Activated naive CD4-positive, alpha-beta T cell treated with anti-CD3 and anti-CD28 coated beads, Interleukin-2, amount 10 ng/mL, durations not matched to agents 7 days and 5 days (primary cell): ENCODE measurements at regions of chr19 and their contacts with region 1.

Region 1: DNA sequence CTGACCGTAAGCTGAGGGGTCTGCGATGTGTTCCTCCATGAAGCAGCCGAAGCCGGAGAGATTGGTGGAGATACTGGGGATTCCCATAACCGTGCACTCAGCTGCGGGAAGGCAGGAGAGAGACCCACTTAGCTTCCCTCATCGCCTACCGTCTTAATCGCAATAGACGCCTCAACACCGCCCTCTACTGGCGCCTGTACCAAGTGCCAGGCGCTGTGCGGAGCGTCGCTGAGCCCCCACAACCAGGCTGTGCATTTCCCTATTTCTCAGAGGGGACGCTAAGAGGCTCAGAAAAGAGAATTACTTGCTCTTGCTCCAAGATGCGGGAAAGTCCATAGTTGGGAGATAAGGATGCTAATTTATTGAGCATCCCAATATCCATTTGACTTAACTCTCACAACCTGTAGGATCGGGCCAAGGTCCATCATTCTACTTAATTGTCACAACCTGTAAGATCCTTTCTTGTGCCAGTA is 5.8 kb downstream of the FTL start:
- DNase-seq: peak; percentile 88
- H3K4me3 Mint-ChIP-seq: no peak overlapping the region
- H3K27ac Mint-ChIP-seq: no peak overlapping the region
- H3K4me1 Mint-ChIP-seq: peaks cover 23% of the 10 kb centered on the region
- H3K27me3 Mint-ChIP-seq: no peaks in the 10 kb centered on the region

Region 2: DNA sequence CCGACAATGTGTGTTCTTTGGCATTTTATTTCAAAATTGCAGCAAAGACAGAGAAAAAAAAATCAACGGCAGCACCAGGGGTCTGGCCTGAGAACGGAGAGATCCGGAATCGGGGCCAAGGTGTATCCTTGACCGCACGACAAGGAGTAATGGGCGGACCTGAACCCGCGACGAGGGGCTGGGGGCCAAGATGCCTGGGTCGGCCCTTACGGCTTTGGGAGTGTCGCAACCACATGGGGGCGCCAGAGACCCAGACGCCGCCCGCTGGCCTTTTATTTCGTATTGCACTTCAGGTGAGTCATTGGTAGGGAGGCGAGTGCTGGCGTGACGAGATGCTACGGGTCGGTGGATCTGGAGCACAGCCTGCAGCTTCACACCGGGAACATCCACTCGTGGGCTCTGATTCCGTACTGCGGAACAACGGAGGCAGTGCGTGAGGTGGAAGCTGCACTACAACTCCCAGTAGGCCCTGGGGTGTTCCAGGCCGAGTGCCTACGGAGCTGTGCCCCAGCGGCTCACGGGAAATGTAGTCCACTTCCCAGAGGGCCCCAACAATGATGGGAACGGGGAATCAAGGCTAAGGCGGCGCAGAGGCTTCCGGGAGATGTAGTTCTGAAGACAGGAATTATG is 175.8 kb before region 1 on chr19:
- CTCF ChIA-PET with region 1: interaction called, 22 read pairs
- DNase-seq: peak; percentile 92
- H3K4me3 Mint-ChIP-seq: peak overlapping the region; percentile 86
- H3K27ac Mint-ChIP-seq: peak overlapping the region; percentile 80
- H3K4me1 Mint-ChIP-seq: peaks cover 8% of the 10 kb centered on the region
- H3K27me3 Mint-ChIP-seq: no peaks in the 10 kb centered on the region

Region 3: GRCh38 chr19:48842789-48843162 is 128.2 kb before region 1 on chr19:
- CTCF ChIA-PET with region 1: interaction called, 17 read pairs
- DNase-seq: peak; percentile 65
- H3K4me3 Mint-ChIP-seq: no peak overlapping the region
- H3K27ac Mint-ChIP-seq: no peak overlapping the region
- H3K4me1 Mint-ChIP-seq: peaks cover 6% of the 10 kb centered on the region
- H3K27me3 Mint-ChIP-seq: peaks cover 2% of the 10 kb centered on the region

Region 4: GRCh38 chr19:48872884-48873475 is 98.0 kb before region 1 on chr19:
- CTCF ChIA-PET with region 1: interaction called, 11 read pairs
- DNase-seq: peak; percentile 90
- H3K4me3 Mint-ChIP-seq: peak overlapping the region; percentile 98
- H3K27ac Mint-ChIP-seq: peak overlapping the region; percentile 99
- H3K4me1 Mint-ChIP-seq: peaks cover 54% of the 10 kb centered on the region
- H3K27me3 Mint-ChIP-seq: peaks cover 20% of the 10 kb centered on the region

Region 5: GRCh38 chr19:48933382-48933932 is 37.5 kb before region 1 on chr19 and contains the start of gene DHDH:
- CTCF ChIA-PET with region 1: interaction called, 10 read pairs
- DNase-seq: peak; percentile 93
- H3K4me3 Mint-ChIP-seq: peak within 1 kb of the TSS; percentile 64
- H3K27ac Mint-ChIP-seq: peak within 1 kb of the TSS; percentile 79
- H3K4me1 Mint-ChIP-seq: peaks cover 22% of the 10 kb centered on the region
- H3K27me3 Mint-ChIP-seq: peaks cover 22% of the 10 kb centered on the region

Region 6: GRCh38 chr19:48993175-48994034 is 22.4 kb after region 1 on chr19 and contains the starts of genes GYS1 and RUVBL2:
- CTCF ChIA-PET with region 1: interaction called, 14 read pairs
- DNase-seq: peak; percentile 99
- H3K4me3 Mint-ChIP-seq: peak within 1 kb of the TSS; percentile 94
- H3K27ac Mint-ChIP-seq: peak within 1 kb of the TSS; percentile 97
- H3K4me1 Mint-ChIP-seq: peaks cover 49% of the 10 kb centered on the region
- H3K27me3 Mint-ChIP-seq: no peaks in the 10 kb centered on the region

Region 7: DNA sequence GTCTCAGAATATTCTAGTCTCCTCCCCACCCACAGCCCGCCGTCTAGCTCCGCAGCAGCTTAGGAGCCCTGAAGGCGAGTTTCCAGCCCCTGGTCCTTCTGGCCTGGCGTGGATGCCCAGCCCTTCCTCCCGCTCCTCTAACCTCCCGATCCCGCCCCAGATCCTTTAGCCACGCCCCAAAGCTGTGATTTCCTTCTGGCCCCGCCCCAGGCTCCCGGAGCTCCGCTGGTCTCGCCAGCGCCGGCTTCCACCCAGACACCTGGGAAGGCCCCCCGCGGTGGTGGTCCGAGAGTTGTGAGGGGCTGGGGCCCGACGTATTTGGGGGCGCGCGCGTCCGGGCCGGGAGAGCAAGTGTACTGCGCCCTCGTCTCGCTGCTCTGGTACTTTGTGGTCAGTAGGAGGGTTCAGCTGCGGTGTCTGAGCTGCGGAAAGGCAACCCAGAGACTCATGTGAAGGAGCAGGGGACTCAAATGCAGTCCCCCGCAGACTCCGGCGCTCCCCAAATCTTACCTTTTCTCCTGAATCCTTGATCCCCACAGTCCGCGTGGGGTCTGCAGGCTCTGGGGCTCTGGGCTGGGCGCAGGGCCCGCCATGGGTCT is 86.8 kb after region 1 on chr19 and contains the start of gene CGB7:
- CTCF ChIA-PET with region 1: no interaction called
- DNase-seq: peak; percentile 65
- H3K4me3 Mint-ChIP-seq: peak within 1 kb of the TSS; percentile 70
- H3K27ac Mint-ChIP-seq: no peak within 1 kb of the TSS
- H3K4me1 Mint-ChIP-seq: peaks cover 26% of the 10 kb centered on the region
- H3K27me3 Mint-ChIP-seq: peaks cover 94% of the 10 kb centered on the region